Dendritic cell treated with granulocyte-macrophage colony-stimulating factor and Interleukin-4, amounts not matched to agents 40 ng/mL and 50 ng/mL, for 4 days (primary cell): ENCODE measurements at regions of chr12 and their contacts with region 1.

Region 1: DNA sequence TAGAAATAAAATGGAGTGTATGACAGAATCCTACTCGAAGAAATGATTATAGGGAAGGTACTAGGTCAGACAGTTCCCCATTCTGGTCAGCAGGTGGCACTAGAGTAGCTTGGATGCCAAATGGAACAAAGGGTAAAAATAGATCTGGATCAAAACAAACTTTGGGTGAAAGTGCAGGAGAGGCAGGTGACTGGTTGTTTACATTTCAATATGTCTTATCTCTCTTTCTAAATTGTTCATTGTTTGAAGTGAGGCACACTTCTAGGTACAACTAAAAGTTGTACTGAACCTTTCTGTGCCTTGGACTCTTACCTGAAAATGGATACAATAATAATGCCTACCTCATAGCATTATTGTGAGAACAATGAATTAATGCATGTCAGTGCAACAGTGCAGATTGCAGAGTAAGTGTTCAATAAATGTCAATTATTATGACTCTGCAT is 62.0 kb upstream of the OSBPL8 start:
- H3K4me3 Mint-ChIP-seq: no peak overlapping the region
- H3K27ac Mint-ChIP-seq: no peak overlapping the region
- H3K4me1 Mint-ChIP-seq: no peaks in the 10 kb centered on the region
- H3K27me3 Mint-ChIP-seq: no peaks in the 10 kb centered on the region

Region 2: DNA sequence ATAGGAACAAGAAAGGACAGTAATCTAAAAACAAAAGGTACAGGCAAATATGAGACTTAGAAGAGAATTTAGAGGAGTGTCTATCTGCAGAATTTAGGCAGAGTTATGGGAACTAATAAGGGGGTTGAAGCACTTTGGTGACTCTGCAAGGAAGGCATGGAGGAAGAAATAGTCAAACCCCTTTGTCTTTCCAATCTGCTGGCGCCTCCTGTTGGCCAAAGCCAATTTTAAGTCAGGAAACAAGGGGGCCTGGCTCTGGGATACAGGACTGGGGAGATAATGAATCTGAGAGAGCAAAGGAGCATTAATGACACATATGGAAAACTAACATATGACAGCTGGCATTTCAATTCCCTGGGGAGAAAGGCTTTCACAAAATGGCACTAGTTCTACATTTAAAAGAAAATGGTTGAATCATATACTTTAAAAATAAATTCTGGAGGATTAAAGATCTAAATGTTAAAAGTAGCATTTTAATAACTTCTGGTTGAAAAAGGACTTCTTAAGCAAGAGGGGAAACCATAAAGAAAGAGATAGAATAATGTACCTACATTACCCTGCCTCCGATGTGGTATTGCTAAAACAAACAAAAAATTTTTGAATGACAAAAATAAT is 305.7 kb after region 1 on chr12:
- intact Hi-C with region 1: loop called (anchors 5 kb)
- H3K4me3 Mint-ChIP-seq: no peak overlapping the region
- H3K27ac Mint-ChIP-seq: no peak overlapping the region
- H3K4me1 Mint-ChIP-seq: no peaks in the 10 kb centered on the region
- H3K27me3 Mint-ChIP-seq: no peaks in the 10 kb centered on the region

Region 3: GRCh38 chr12:77010691-77011548 is 389.3 kb after region 1 on chr12:
- intact Hi-C with region 1: loop called (anchors 2 kb)
- H3K4me3 Mint-ChIP-seq: no peak overlapping the region
- H3K27ac Mint-ChIP-seq: no peak overlapping the region
- H3K4me1 Mint-ChIP-seq: peaks cover 6% of the 10 kb centered on the region
- H3K27me3 Mint-ChIP-seq: no peaks in the 10 kb centered on the region